Posterior cingulate gyrus (tissue), 11 donors: ENCODE measurements at regions of chr9 and their contacts with region 1.

Region 1: GRCh38 chr9:96619491-96620154 is at the start of gene CDC14B:
- DNase-seq: peak; percentile 80 to 98 (median 90)

Region 2: GRCh38 chr9:96500696-96501632 is 118.7 kb before region 1 on chr9:
- intact Hi-C with region 1: loop called (anchors 10 kb)
- DNase-seq: peak in 1 of 10 donors; percentile 49

Region 3: DNA sequence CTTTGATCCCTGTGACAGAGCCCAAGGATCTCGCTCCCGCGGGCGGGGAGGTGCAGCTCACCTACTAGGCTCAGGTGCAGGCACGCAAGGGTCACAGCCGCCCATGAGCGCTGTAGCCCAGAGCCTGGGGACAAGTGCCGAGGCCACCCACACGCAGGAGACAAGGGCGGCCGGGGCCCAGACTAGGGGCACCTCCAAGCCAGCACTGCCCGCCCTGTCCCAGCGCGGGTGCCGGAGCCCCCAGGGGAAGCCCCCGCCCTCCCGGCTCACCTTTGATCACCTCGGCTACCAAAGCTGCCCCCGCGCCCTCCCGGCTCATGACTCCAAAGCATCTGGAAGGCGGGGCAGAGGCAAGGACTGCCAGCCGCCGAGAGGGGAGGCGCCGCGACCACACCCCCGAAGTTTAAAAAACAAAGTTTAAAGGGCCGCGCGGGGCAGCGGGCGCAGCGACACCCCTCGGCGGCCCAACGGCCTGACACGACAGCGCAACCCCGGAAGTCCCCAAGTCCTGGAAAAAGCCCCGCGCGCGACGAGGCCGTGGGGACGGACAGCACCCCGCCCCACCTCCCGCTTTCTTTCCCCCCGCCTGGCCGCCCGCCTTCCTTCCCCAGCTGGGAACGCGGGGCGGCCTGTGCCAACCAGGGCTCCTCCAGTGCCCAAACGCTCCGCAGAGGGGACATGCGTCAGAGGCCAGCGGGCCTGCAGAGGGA is 53.0 kb before region 1 on chr9:
- intact Hi-C with region 1: loop called (anchors 2 kb)
- DNase-seq: peak; percentile 63 to 97 (median 78)

Region 4: DNA sequence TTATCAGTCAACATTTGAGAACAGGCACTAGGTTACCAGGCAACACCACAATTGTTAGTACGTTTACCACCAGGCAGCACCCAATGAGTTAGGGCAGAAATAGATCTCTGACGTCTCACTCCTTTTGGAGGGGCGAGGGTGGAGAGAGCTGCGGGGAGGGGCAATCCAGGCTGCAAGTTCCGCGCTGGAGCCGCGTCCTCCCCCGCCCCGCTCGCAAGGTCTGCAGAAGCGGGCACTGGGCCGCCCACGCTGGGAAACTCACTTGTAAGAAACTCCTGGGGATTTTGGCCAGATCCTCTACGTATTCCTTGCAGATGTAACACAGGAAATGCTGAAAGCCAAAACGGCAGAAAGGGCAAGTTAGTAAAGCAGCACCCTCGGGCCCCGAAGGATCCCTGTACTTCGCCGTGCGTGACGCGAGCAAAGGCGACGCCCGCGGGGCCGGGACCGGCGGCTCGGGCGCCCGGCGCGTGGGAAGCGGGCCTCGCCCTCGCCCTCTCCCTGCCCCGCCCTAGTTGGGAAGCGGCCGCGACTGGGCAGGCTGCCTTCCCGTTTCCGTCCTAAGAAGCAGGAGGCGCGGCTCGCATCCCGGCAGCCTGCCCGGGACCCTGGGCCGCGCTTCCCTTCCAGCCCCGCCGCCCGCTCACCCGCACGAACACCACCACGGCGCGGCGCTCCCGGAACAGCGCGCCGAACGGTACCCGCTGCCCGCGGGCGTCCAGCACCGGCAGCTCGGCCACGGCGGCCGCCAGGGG is 35.0 kb after region 1 on chr9:
- intact Hi-C with region 1: loop called (anchors 2 kb)
- DNase-seq: peak; percentile 49 to 95 (median 72)